PC-3 (cell line): ENCODE measurements at regions of chr19 and their contacts with region 1.

Region 1: DNA sequence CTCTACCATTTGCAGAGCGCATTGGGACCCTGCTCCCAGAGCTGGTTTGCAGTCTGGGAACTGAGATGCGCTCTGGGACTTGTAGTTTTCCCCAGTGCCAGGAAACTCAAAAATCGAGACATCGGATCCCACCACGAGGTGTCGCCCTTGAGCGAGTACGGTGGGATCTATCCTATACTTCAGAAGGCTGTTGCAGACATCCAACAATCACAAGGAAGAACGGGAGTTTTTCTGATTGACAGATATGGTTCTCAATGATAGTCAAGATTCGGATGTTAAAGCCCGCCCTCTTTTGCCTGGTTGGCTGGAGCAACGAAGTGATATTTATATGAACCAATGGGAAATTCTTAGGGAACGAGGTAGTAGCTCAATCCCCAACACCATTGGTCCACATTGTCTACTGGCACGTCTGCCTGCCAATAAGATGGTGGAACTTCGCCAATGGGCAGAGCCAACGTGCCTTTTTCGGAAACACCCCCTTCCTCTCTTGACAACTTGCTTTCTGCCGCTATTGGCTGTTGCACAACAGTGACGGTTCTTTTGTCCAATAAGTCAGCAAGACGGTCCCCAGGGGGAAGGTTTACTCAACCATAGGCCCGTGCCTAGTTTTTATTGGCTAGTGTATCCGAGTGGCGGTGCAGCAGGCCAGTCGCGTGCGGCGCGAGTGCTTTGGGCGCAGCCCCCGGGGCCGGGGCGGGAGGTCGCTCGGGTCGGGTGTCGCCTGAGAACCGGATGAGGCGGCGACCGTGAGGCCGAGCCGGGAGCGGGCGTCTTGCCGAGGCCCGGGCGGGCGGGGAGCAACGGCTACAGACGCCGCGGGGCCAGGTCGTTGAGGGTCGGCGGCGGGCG is at the start of gene DNM2:
- DNase-seq: peak; percentile 100
- ATAC-seq: peak; percentile 88
- H3K4me3 ChIP-seq: peak within 1 kb of the TSS; percentile 81
- H3K27ac ChIP-seq: peak within 1 kb of the TSS; percentile 32
- H3K4me1 ChIP-seq: peaks cover 15% of the 10 kb centered on the region
- H3K27me3 ChIP-seq: no peaks in the 10 kb centered on the region
- CTCF ChIP-seq: peak; percentile 95
- total RNA-seq, gene DNM2: 150 and 211 TPM in 2 replicates

Region 2: DNA sequence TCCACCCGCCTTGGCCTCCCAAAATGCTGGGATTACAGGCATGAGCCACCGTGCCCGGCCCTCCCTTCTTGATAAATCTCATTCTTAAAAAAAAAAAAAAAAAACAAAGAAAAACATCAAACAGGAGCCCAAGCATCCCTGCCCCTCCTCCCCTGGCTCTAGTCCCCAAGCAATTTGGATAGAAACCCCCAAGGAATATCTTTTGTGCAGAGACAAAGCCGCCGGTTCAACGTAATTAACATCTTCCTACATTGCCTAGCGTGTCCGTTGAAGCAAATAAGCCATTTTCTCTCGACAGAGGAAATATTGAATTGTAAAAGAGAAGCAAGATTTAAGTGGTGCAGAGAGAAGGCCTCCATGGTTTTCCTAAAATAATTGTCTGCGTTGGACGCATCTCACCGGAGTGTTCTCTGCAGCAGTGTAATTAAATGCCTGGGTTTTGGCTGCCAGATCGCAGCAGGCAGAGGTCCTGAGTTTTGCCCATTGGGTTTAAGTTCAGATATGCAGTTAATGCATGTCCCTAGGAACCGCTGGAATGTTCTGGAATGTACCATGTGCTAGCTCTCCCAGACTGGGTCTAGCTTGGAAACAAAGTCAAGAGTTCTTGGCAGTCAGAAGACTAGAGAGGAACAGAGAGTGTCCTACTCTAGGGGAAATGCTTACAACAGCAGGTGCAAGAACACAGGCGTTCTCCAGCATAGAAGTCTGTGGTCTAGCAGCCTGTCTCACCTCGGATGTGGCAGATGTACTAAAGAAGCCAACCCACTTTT is 851.7 kb before region 1 on chr19:
- CTCF ChIA-PET with region 1: no interaction called
- POLR2A ChIA-PET with region 1: no interaction called
- intact Hi-C with region 1: no loop called
- DNase-seq: no peak
- ATAC-seq: no peak
- H3K4me3 ChIP-seq: no peak overlapping the region
- H3K27ac ChIP-seq: no peak overlapping the region
- H3K4me1 ChIP-seq: no peaks in the 10 kb centered on the region
- H3K27me3 ChIP-seq: no peaks in the 10 kb centered on the region
- CTCF ChIP-seq: no peak

Region 3: DNA sequence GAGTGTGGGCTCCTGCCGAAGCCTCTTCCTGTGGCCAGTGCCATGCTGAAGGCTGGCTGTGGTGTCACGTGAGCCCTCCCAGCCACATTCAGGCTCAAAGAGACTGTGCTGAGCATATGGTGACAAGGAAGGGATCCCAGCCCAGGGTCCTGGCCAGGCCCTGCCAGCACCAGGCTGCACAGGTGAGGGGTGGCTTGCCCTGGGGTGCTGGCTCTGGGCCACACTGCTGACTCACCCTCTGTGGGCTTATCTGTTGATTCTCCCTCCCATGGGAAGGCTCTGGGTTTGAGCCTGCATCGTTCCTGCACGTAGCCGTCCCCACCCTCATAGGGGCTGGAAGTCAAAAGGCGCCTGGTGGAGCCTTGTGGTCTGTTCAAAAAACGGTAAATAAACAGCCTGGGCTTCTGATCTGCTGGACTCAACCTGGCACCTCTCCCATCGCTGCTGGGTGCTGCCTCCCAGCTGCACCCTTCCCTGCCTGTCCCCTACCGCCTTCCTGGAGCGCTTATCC is 31.4 kb after region 1 on chr19:
- CTCF ChIA-PET with region 1: no interaction called
- POLR2A ChIA-PET with region 1: no interaction called
- intact Hi-C with region 1: no loop called
- DNase-seq: peak; percentile 90
- ATAC-seq: peak; percentile 87
- H3K4me3 ChIP-seq: no peak overlapping the region; the same call in 1 of the 2 replicates
- H3K27ac ChIP-seq: peak overlapping the region; percentile 52
- H3K4me1 ChIP-seq: peaks cover 29% of the 10 kb centered on the region
- H3K27me3 ChIP-seq: no peaks in the 10 kb centered on the region
- CTCF ChIP-seq: no peak

Region 4: GRCh38 chr19:10760273-10760944 is 42.8 kb after region 1 on chr19:
- CTCF ChIA-PET with region 1: no interaction called
- POLR2A ChIA-PET with region 1: no interaction called
- intact Hi-C with region 1: loop called (anchors 2 kb)
- DNase-seq: peak; percentile 91
- ATAC-seq: peak; percentile 91
- H3K4me3 ChIP-seq: no peak overlapping the region
- H3K27ac ChIP-seq: peak overlapping the region; percentile 68
- H3K4me1 ChIP-seq: peaks cover 22% of the 10 kb centered on the region
- H3K27me3 ChIP-seq: no peaks in the 10 kb centered on the region
- CTCF ChIP-seq: no peak

Region 5: GRCh38 chr19:10769533-10770491 is 52.2 kb after region 1 on chr19:
- CTCF ChIA-PET with region 1: interaction called, 20 read pairs
- POLR2A ChIA-PET with region 1: interaction called, 6 read pairs
- intact Hi-C with region 1: loop called (anchors 1 kb)
- DNase-seq: peak; percentile 33
- ATAC-seq: peak; percentile 45
- H3K4me3 ChIP-seq: no peak overlapping the region
- H3K27ac ChIP-seq: no peak overlapping the region
- H3K4me1 ChIP-seq: peaks cover 18% of the 10 kb centered on the region
- H3K27me3 ChIP-seq: no peaks in the 10 kb centered on the region
- CTCF ChIP-seq: peak; percentile 50; the same call in 1 of the 2 replicates

Region 6: GRCh38 chr19:10835754-10836477 is 118.3 kb after region 1 on chr19 and contains the start of gene TMED1:
- CTCF ChIA-PET with region 1: interaction called, 9 read pairs
- POLR2A ChIA-PET with region 1: interaction called, 4 read pairs
- intact Hi-C with region 1: loop called (anchors 1 kb)
- DNase-seq: peak; percentile 100
- ATAC-seq: peak; percentile 88
- H3K4me3 ChIP-seq: peak within 1 kb of the TSS; percentile 69
- H3K27ac ChIP-seq: peak within 1 kb of the TSS; percentile 81
- H3K4me1 ChIP-seq: peaks cover 16% of the 10 kb centered on the region
- H3K27me3 ChIP-seq: no peaks in the 10 kb centered on the region
- CTCF ChIP-seq: peak; percentile 33; the same call in 1 of the 2 replicates
- total RNA-seq, gene TMED1: 81.2 and 94.6 TPM in 2 replicates

Region 7: DNA sequence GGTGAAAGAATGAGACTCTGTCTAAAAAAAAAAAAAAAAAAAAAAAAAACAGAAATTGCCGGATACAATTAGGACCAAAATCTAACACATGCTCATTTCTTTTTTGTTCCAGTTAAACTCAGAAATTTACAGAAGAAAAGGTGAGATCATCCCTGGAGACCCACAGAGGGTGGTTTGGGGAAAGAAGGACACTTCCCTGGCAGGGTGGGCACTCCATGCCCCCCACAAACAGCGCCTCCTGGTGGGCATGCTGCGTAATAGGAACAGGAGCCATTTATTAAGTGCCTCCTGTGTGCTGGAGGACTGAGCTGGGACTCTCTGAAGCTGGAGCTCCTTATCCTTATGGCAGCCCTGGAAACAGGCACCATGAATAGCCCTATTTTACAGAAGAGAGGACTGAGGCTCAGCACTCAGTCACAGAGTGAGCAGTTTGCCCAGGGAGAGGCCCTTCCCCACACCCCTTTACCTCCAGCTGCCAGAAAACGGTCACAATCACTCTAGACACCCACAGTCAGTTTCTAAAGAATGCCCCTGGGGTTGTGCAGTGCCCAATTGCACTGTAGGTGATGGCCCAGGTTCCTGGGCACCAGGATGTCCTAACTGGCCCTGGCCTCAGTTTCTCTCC is 140.7 kb after region 1 on chr19:
- CTCF ChIA-PET with region 1: interaction called, 23 read pairs
- POLR2A ChIA-PET with region 1: no interaction called
- intact Hi-C with region 1: no loop called
- DNase-seq: peak; percentile 42
- ATAC-seq: no peak
- H3K4me3 ChIP-seq: no peak overlapping the region
- H3K27ac ChIP-seq: no peak overlapping the region
- H3K4me1 ChIP-seq: no peaks in the 10 kb centered on the region
- H3K27me3 ChIP-seq: no peaks in the 10 kb centered on the region
- CTCF ChIP-seq: peak; percentile 97

Region 8: DNA sequence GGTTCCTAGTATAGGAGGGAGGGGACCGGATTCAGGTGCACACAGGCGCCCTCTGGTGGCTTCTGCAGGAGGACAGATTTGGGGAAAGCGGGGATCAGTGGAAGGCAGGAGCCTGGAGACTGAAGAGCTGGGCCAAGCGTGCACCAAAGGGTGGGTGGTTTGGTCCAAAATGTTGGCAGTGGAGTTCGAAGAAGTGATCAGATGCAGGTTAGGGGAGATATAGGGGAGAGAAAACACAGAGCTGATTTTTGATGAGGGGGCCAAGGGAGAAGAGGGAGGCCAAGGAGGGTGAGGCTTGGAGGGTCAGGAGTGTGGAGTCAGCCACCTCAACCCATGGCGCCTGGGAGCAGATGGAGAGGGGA is 146.9 kb after region 1 on chr19:
- CTCF ChIA-PET with region 1: interaction called, 15 read pairs
- POLR2A ChIA-PET with region 1: no interaction called
- intact Hi-C with region 1: loop called (anchors 1 kb)
- DNase-seq: peak; percentile 90
- ATAC-seq: peak; percentile 97
- H3K4me3 ChIP-seq: no peak overlapping the region
- H3K27ac ChIP-seq: no peak overlapping the region
- H3K4me1 ChIP-seq: peaks cover 3% of the 10 kb centered on the region; the same call in 1 of the 2 replicates
- H3K27me3 ChIP-seq: no peaks in the 10 kb centered on the region
- CTCF ChIP-seq: peak; percentile 96